ENCODE measurements at regions of chr12 and their contacts with region 1.

Region 1: GRCh38 chr12:1795785-1796514 is 24.4 kb upstream of the LRTM2 start:
- DNase-seq: peak; percentile 96
- ATAC-seq: peak; percentile 91
- H3K4me3 Mint-ChIP-seq: peak overlapping the region; percentile 90
- H3K27ac Mint-ChIP-seq: peak overlapping the region; percentile 84
- H3K4me1 Mint-ChIP-seq: peaks cover 31% of the 10 kb centered on the region
- H3K27me3 Mint-ChIP-seq: no peaks in the 10 kb centered on the region
- CTCF ChIP-seq: peak; percentile 79

Region 2: GRCh38 chr12:389139-390096 is 1406.5 kb before region 1 on chr12 and contains the start of gene KDM5A:
- CTCF ChIA-PET with region 1: no interaction called
- POLR2A ChIA-PET with region 1: no interaction called
- intact Hi-C with region 1: loop called (anchors 1 kb)
- DNase-seq: peak; percentile 83
- ATAC-seq: peak; percentile 92
- H3K4me3 Mint-ChIP-seq: peak within 1 kb of the TSS; percentile 95
- H3K27ac Mint-ChIP-seq: peak within 1 kb of the TSS; percentile 97
- H3K4me1 Mint-ChIP-seq: peaks cover 46% of the 10 kb centered on the region
- H3K27me3 Mint-ChIP-seq: no peaks in the 10 kb centered on the region
- CTCF ChIP-seq: no peak
- total RNA-seq, gene KDM5A: 113 and 135 TPM in 2 replicates

Region 3: DNA sequence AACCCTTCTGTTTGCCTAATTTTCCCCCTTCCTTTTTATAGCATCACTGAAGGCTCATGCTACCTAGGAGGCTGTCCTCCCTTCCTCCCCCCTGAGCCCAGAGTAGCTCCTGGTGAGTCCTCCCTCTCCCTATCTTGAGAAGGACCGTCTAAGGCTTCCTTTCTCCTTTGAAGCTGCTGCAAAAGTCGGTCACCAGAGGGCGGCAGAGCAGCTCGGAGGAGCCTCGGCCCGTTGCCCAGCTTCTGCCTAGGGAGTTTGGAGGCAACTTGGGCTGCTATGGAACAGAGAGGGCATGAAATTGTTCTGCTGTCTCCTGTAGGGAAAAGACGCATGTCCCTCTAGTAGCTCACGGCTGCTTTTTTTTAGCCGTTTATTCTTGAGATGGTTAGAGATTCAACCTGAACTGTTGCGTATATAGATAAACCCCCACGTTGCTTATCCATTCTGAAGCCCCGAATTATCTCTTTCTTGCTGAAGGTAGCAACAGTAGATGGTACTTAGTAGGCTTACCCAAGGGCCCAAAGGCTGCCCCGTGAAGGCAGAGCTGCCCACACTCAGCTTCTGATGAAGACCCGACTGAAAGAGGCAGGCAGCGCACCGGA is 161.3 kb before region 1 on chr12:
- CTCF ChIA-PET with region 1: interaction called, 62 read pairs
- POLR2A ChIA-PET with region 1: no interaction called
- intact Hi-C with region 1: loop called (anchors 1 kb)
- DNase-seq: peak; percentile 33
- ATAC-seq: peak; percentile 57
- H3K4me3 Mint-ChIP-seq: no peak overlapping the region
- H3K27ac Mint-ChIP-seq: no peak overlapping the region
- H3K4me1 Mint-ChIP-seq: peaks cover 17% of the 10 kb centered on the region
- H3K27me3 Mint-ChIP-seq: peaks cover 26% of the 10 kb centered on the region
- CTCF ChIP-seq: no peak

Region 4: GRCh38 chr12:1661553-1662335 is 134.2 kb before region 1 on chr12:
- CTCF ChIA-PET with region 1: interaction called, 257 read pairs
- POLR2A ChIA-PET with region 1: interaction called, 5 read pairs
- intact Hi-C with region 1: no loop called
- DNase-seq: peak; percentile 75
- ATAC-seq: peak; percentile 93
- H3K4me3 Mint-ChIP-seq: peak overlapping the region; percentile 84
- H3K27ac Mint-ChIP-seq: peak overlapping the region; percentile 84
- H3K4me1 Mint-ChIP-seq: peaks cover 18% of the 10 kb centered on the region
- H3K27me3 Mint-ChIP-seq: no peaks in the 10 kb centered on the region
- CTCF ChIP-seq: no peak

Region 5: DNA sequence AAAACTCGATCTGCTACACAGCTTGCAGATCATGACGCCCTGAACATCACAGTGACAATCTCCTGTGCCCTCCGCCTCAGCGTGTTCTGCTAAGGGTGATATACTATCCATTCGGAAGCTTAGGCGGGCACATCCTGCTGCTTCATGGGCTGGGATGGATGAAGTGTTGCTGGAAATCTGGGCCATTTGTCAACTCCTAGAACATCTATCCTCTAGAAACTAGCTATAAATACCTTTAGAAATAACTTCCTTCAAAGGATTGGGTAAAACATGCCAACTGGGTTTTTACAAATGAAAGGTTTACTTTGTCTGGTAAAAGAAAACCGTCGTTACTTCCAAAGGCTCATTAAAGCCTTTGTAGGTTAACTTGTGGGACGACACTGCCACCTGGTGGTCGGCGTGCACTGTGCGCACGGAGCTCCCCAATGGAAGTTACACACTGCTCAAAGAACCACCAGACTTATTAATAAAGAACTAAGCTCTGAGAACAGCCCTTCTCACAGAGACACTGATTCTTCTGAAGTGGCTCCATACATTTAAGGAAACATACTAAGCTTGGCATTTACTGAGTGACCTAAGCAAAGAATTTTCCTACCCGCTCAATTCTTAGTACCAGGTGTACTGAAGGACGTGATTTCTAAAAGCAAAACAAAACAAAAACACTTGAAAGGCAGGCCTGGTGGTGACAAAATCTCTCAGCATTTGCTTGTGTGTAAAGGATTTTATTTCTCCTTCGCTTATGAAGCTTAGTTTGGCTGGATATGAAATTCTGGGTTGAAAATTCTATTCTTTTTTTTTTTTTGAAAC is 144.1 kb after region 1 on chr12:
- CTCF ChIA-PET with region 1: interaction called, 205 read pairs
- POLR2A ChIA-PET with region 1: interaction called, 48 read pairs
- intact Hi-C with region 1: loop called (anchors 1 kb)
- DNase-seq: peak; percentile 83
- ATAC-seq: peak; percentile 99
- H3K4me3 Mint-ChIP-seq: no peak overlapping the region
- H3K27ac Mint-ChIP-seq: peak overlapping the region; percentile 41
- H3K4me1 Mint-ChIP-seq: peaks cover 6% of the 10 kb centered on the region
- H3K27me3 Mint-ChIP-seq: no peaks in the 10 kb centered on the region
- CTCF ChIP-seq: no peak

Region 6: GRCh38 chr12:2034633-2035430 is 238.9 kb after region 1 on chr12:
- CTCF ChIA-PET with region 1: no interaction called
- POLR2A ChIA-PET with region 1: no interaction called
- intact Hi-C with region 1: loop called (anchors 1 kb)
- DNase-seq: peak; percentile 79
- ATAC-seq: peak; percentile 100
- H3K4me3 Mint-ChIP-seq: peak overlapping the region; percentile 70
- H3K27ac Mint-ChIP-seq: no peak overlapping the region
- H3K4me1 Mint-ChIP-seq: peaks cover 10% of the 10 kb centered on the region
- H3K27me3 Mint-ChIP-seq: peaks cover 69% of the 10 kb centered on the region
- CTCF ChIP-seq: no peak

Region 7: DNA sequence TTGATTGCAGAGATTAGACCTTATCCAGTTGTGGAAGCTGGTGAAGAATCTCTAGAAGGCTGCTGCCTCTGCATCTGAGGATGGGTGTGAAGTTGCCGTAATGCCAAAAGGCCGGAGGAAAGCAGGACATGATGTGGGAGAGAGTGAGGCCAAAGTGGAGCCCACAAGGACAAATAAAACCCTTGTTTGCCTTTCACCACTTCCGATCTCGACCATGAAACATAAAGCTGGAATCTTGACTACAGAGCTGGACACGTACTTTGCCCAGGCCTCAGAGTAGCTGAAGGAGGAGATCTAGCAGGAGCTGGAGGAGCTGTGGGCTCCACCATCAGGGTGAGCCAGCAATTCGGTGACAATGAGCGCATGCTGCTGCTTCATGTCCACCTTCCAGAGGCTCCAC is 251.8 kb after region 1 on chr12:
- CTCF ChIA-PET with region 1: no interaction called
- POLR2A ChIA-PET with region 1: no interaction called
- intact Hi-C with region 1: no loop called
- DNase-seq: no peak
- ATAC-seq: no peak
- H3K4me3 Mint-ChIP-seq: no peak overlapping the region
- H3K27ac Mint-ChIP-seq: no peak overlapping the region
- H3K4me1 Mint-ChIP-seq: peaks cover 16% of the 10 kb centered on the region
- H3K27me3 Mint-ChIP-seq: peaks cover 28% of the 10 kb centered on the region
- CTCF ChIP-seq: no peak

Region 8: DNA sequence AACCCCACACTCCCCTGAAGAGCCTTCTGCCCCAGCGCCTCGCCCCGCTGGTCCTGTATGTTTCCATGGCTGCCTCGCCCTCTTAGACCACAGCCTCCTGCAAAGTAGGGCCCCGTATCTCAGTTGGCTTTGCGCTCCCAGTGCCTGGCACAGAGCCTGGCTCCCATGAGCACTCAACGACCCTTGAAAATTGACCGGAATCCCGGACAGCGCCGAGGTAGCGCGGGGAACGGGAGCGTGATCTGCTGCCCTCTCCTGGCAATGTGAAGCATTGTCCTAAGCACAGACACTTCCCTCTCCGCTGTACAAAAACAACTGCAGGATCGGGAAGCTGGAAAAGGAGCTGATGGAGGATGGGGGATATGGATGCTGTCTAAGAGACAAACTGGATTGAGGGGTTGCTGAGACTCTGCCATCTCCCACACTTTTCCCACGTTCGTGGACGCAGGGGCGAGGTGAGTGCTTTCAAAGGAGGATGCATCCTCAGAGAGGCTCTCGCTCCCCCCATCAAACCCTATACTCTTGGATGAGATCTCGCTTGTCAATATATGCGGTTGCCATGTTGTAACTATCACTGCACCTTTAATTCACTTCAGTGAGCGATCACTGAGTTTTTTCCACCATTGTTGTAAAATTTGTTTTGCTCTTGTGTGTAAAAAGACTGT is 988.1 kb after region 1 on chr12:
- CTCF ChIA-PET with region 1: interaction called, 4 read pairs
- POLR2A ChIA-PET with region 1: no interaction called
- intact Hi-C with region 1: loop called (anchors 5 kb)
- DNase-seq: peak; percentile 43
- ATAC-seq: peak; percentile 92
- H3K4me3 Mint-ChIP-seq: peak overlapping the region; percentile 85
- H3K27ac Mint-ChIP-seq: no peak overlapping the region
- H3K4me1 Mint-ChIP-seq: peaks cover 9% of the 10 kb centered on the region
- H3K27me3 Mint-ChIP-seq: peaks cover 17% of the 10 kb centered on the region
- CTCF ChIP-seq: no peak

Measured in activated B cell treated with CpG ODN at 0.5 μM for 24 hours (primary cell).